Dendritic cell treated with granulocyte-macrophage colony-stimulating factor and Interleukin-4, amounts not matched to agents 40 ng/mL and 50 ng/mL, for 4 days (primary cell): ENCODE measurements at regions of chr18 and their contacts with region 1.

Region 1: GRCh38 chr18:79988451-79989194 is at the start of gene TXNL4A:
- H3K4me3 Mint-ChIP-seq: peak within 1 kb of the TSS; percentile 90
- H3K27ac Mint-ChIP-seq: peak within 1 kb of the TSS; percentile 95
- H3K4me1 Mint-ChIP-seq: peaks cover 36% of the 10 kb centered on the region
- H3K27me3 Mint-ChIP-seq: no peaks in the 10 kb centered on the region

Region 2: GRCh38 chr18:79302120-79302519 is 686.5 kb before region 1 on chr18:
- intact Hi-C with region 1: no loop called
- H3K4me3 Mint-ChIP-seq: no peak overlapping the region
- H3K27ac Mint-ChIP-seq: no peak overlapping the region
- H3K4me1 Mint-ChIP-seq: peaks cover 5% of the 10 kb centered on the region
- H3K27me3 Mint-ChIP-seq: no peaks in the 10 kb centered on the region

Region 3: GRCh38 chr18:79765491-79766245 is 223.0 kb before region 1 on chr18:
- intact Hi-C with region 1: no loop called
- H3K4me3 Mint-ChIP-seq: no peak overlapping the region
- H3K27ac Mint-ChIP-seq: no peak overlapping the region
- H3K4me1 Mint-ChIP-seq: no peaks in the 10 kb centered on the region
- H3K27me3 Mint-ChIP-seq: peaks cover 3% of the 10 kb centered on the region

Region 4: DNA sequence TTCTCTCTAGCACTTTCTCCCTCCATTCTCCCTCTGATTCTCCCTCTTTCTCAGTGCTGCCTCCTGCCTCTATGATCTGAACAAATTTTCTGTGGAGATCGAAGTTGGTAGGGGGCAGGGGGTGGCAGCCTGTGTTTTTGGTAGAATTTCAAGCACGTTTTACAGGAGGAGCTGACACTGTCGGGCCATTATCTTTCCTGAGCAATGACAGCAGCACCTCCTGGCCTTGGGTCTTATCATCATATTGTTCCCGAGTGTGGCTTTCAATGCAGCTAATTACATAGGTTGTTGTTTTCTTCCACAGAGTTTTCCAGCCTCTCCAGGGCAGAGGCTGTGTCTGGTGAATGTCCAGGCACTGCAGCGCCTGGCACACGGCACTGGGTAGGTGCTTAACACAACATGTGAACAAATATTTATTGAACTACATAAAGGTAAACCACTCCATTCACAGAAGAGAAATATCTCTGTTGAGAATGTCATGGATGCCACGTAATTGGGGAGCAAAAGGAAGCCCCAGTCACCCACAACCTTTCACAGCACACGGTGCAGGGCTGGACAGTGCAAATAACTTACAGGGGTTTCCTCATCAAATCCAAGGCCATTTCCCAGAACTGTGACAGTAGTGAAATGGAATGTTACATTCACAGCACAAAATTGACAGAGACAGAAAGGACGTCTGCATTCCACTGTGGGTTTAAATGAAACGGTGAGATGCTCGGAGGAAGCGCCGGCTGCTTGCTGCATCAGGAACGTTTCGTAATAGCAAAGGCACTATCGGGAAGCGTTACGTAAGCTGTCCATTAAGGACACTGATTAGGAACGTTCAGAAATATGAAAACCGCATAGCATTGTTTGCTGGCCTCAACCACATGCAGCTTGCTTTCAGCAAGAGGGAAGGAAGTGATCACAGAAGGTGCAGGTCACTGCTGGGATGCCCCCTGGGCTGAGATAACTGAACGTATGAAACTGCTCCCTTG is 197.3 kb before region 1 on chr18:
- intact Hi-C with region 1: loop called (anchors 10 kb)
- H3K4me3 Mint-ChIP-seq: peak overlapping the region; percentile 21
- H3K27ac Mint-ChIP-seq: peak overlapping the region; percentile 70
- H3K4me1 Mint-ChIP-seq: peaks cover 65% of the 10 kb centered on the region
- H3K27me3 Mint-ChIP-seq: peaks cover 76% of the 10 kb centered on the region

Region 5: GRCh38 chr18:79951578-79952455 is 36.8 kb before region 1 on chr18 and contains the start of gene SLC66A2:
- intact Hi-C with region 1: loop called (anchors 1 kb)
- H3K4me3 Mint-ChIP-seq: peak within 1 kb of the TSS; percentile 91
- H3K27ac Mint-ChIP-seq: peak within 1 kb of the TSS; percentile 90
- H3K4me1 Mint-ChIP-seq: peaks cover 62% of the 10 kb centered on the region
- H3K27me3 Mint-ChIP-seq: peaks cover 4% of the 10 kb centered on the region

Region 6: DNA sequence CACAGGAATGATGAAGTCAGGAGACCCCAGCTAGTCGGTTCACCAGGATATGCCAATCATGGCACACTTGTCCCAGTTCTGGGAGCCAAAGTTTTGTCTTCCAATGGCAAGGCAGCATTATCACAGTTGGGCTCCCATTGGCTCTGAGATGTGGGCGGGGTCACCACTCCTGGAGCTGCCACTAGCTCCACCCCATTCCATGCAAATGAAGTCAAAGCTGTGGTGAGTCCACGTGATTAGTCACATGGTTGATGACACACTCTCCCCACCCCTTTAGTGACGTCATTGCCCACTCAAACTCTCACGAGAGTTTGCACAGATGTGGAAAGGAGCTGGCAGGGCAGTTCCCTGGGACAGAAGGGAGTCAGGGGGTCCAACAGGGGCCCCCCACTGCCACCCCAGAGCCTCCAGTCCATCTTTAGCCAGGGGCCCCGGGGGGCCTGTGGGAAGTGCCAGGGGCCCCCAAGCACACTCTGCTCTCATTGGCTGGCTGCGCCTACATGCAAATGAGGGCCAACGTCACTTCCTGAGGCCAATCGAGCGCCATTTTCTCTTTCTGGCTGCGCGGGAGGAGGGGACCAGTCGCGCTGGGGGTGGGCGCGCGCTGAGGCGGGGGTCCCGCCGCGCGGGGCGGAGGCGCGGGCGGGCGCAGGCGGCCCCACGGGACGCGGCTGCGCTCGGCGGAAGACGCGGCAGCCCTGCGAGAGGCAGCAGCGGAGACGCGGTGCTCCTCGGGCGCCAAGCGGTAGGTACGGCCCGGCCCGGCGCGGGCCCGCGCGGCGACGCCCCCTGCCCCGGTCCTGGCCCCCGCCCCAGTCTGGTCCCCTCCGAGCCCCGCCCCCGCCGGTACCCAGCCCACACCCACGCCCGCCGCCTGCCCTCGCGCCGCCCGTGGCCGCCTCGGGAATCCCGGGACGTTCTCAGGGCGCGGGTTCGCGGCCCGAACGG is 120.4 kb after region 1 on chr18 and contains the start of gene ADNP2:
- intact Hi-C with region 1: loop called (anchors 5 kb)
- H3K4me3 Mint-ChIP-seq: peak within 1 kb of the TSS; percentile 79
- H3K27ac Mint-ChIP-seq: peak within 1 kb of the TSS; percentile 78
- H3K4me1 Mint-ChIP-seq: peaks cover 25% of the 10 kb centered on the region
- H3K27me3 Mint-ChIP-seq: peaks cover 3% of the 10 kb centered on the region